Activated T-helper 1 cell treated with anti-CD3 and anti-CD28 coated beads, Interleukin-12 subunit alpha, Interleukin-12 subunit beta, Interleukin-2, Interleukin-4 antibody, amounts not matched to agents 30 ng/mL and 10 ng/mL and 1 ng/mL, durations not matched to agents 14 hours and 24 hours and 36 hours (primary cell): ENCODE measurements at regions of chr9 and their contacts with region 1.

Region 1: GRCh38 chr9:90870621-90871326 is 69.2 kb downstream of the SYK start:
- DNase-seq: no peak
- H3K4me3 Mint-ChIP-seq: no peak overlapping the region
- H3K27ac Mint-ChIP-seq: no peak overlapping the region
- H3K4me1 Mint-ChIP-seq: no peaks in the 10 kb centered on the region
- H3K27me3 Mint-ChIP-seq: peaks cover 14% of the 10 kb centered on the region

Region 2: DNA sequence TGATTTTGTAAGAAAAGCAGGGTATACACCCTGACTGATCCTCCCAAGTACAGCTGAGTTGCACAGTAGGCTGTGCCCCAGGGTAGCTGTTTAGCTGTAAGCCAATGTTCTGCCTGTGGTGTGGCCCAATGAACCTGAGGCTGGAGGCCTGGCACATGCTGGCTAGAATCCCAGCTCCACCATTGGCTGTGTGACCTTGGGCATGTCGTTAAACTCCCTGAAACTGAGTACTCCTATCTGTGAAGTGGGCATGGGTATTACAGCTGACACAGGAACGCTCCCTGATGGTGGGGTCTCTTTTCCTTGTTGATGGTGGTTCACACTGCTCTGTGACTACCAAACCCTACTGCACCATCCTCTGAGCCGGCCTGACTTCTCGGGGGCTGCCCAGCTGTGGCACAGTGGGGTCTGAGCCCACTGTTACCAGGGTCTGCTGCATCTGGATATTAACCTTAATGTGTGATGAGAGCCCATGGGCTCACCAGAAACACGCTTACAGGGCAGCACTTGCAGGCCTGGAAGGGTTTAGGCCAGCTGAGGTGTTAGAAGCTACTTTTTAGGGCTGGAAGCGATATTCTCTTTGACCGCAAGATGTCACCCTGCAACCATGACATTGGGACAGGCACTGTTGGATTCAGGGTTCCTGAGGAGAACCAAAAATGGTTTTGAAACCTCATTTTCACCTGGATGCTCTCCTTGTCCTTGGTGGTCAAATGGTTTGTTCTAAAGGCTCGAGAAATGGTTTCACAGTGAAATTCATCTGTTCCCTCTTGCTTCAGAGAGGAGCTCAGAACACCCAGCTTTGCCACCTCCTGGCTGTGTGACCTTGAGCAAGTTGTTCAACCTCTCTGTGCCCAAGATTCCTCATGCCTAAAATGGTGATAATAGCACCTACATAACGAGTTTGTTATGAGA is 1272.8 kb before region 1 on chr9:
- intact Hi-C with region 1: loop called (anchors 2 kb)
- DNase-seq: peak; percentile 48
- H3K4me3 Mint-ChIP-seq: no peak overlapping the region
- H3K27ac Mint-ChIP-seq: no peak overlapping the region
- H3K4me1 Mint-ChIP-seq: peaks cover 2% of the 10 kb centered on the region
- H3K27me3 Mint-ChIP-seq: peaks cover 16% of the 10 kb centered on the region

Region 3: DNA sequence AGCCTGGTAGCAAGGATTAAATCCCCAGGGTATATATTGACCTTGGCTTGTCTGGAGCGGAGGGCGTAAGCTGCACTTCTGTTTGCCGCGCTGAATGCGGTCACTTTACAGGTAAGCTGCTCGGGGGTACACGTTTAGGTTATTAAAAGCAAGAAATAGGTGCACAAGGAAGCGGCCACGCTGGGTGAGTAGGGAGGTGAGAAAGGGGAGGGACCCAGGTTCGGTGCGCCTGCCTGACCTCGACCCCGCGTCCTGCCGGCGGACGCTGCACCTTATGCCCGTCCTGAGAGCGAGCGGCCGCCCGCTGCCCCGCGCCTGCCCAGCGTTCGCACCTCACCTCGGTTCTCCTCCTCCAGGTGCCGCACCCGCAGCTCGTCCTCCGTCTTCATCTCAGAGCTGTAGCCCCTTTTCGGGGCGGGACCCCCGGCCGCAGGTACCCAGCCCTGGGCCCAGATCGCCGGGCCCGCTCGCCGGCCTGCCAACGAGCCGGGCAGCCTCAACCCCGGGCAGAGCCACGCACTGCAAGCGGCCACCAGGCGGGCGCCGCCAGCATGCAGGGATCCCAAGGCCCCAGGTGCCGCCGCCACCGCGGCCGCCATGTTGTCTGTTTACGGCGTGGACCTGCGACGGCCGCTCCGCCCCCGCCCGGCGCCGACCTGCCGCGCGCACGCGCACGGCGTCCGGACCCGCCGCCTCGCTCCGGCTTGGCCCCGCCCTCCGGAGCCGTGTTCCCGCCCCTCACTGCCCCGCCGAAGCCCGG is 490.7 kb after region 1 on chr9 and contains the start of gene AUH:
- intact Hi-C with region 1: no loop called
- DNase-seq: peak; percentile 85
- H3K4me3 Mint-ChIP-seq: peak within 1 kb of the TSS; percentile 97
- H3K27ac Mint-ChIP-seq: peak within 1 kb of the TSS; percentile 94
- H3K4me1 Mint-ChIP-seq: peaks cover 48% of the 10 kb centered on the region
- H3K27me3 Mint-ChIP-seq: no peaks in the 10 kb centered on the region
- total RNA-seq, gene AUH: 50.4 and 53.3 TPM in 2 replicates